ENCODE measurements at regions of chr11 and their contacts with region 1.

Region 1: DNA sequence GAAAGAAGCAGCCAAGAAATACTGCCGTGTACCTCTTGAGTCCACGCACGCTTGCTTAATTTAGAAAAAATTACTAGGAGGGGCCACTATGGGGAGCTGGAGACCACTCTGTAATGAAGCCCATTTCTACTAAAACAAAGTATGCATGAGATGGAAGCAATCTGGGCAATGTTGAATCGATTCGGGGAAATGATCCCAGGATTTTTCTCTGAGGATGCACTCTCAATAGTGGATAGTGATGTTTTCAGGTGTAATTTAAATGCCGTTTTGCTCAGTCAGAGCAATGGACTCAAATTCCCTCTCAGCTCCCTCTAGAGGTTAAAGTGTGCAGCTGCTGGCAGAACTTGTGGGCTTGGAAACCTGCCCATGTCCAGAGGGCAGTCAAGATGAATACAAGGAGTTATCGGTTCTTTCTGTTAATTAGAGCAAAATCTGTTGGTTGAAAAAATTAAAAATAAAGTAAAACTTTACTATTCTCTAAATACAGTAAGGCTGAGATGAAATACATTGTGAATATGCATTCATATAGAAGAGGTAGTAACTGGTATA is 64.1 kb downstream of the ME3 start:
- DNase-seq: peak; percentile 57
- H3K4me3 ChIP-seq: no peak overlapping the region
- H3K27ac ChIP-seq: no peak overlapping the region
- H3K27me3 ChIP-seq: no peaks in the 10 kb centered on the region
- CTCF ChIP-seq: peak; percentile 94

Region 2: GRCh38 chr11:86360775-86361395 is 247.4 kb before region 1 on chr11:
- CTCF ChIA-PET with region 1: interaction called, 15 read pairs
- POLR2A ChIA-PET with region 1: no interaction called
- DNase-seq: peak; percentile 24
- H3K4me3 ChIP-seq: no peak overlapping the region
- H3K27ac ChIP-seq: no peak overlapping the region
- H3K27me3 ChIP-seq: no peaks in the 10 kb centered on the region
- CTCF ChIP-seq: peak; percentile 62

Region 3: DNA sequence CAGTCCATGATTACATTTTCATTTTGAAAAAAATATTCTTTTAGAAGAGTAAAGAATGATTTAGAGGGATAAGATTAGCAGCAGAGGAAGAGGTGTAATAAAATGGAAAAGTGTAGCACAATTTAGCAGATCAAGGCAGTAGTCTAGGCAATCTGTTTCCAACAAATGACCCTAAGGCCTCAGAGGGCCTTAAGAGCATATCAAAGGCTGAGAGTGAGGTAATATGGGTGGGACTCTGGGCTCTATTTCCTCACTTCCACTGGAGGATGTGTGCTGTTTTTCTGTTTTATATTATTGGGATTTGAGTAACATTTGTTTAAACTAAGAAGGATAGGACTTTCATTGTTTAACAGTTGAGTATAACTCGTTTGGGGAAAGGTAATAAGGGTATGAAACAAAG is 204.9 kb before region 1 on chr11:
- CTCF ChIA-PET with region 1: no interaction called
- POLR2A ChIA-PET with region 1: no interaction called
- DNase-seq: no peak
- H3K4me3 ChIP-seq: no peak overlapping the region
- H3K27ac ChIP-seq: no peak overlapping the region
- H3K27me3 ChIP-seq: no peaks in the 10 kb centered on the region
- CTCF ChIP-seq: no peak

Region 4: GRCh38 chr11:86551286-86552092 is 56.8 kb before region 1 on chr11:
- CTCF ChIA-PET with region 1: interaction called, 12 read pairs
- POLR2A ChIA-PET with region 1: no interaction called
- DNase-seq: peak; percentile 76
- H3K4me3 ChIP-seq: no peak overlapping the region
- H3K27ac ChIP-seq: no peak overlapping the region
- H3K27me3 ChIP-seq: no peaks in the 10 kb centered on the region
- CTCF ChIP-seq: no peak

Region 5: DNA sequence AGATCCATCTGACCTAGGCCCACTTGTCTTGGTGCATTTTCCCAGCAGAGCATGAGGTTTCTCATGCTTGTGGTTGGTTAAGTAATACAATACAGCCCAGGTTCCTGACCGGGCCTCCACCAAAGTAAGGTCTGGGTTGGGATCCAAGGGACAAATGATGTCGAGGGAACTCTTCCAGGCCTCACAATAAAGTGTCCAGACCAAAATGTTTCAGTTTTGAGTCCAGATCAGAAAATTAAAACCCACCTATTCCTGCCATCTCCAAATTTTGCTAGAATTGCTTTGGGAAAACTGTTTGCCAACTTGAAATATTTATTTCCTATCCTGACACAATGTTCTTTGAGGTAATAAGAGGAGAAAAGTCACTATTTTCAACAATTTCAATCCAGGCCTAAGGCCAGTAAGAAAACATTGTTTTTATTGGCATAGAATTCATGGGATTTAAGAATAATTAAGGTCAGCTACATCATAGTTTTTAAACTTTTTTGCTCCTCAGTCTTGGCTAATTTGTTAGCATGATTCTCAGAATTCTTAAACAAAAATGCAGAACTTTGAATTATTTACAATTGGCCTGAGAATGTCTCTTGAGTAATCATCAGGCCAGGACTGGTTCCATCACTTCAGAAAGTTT is 12.7 kb after region 1 on chr11:
- CTCF ChIA-PET with region 1: interaction called, 75 read pairs
- POLR2A ChIA-PET with region 1: no interaction called
- DNase-seq: no peak
- H3K4me3 ChIP-seq: no peak overlapping the region
- H3K27ac ChIP-seq: no peak overlapping the region
- H3K27me3 ChIP-seq: no peaks in the 10 kb centered on the region
- CTCF ChIP-seq: no peak

Region 6: DNA sequence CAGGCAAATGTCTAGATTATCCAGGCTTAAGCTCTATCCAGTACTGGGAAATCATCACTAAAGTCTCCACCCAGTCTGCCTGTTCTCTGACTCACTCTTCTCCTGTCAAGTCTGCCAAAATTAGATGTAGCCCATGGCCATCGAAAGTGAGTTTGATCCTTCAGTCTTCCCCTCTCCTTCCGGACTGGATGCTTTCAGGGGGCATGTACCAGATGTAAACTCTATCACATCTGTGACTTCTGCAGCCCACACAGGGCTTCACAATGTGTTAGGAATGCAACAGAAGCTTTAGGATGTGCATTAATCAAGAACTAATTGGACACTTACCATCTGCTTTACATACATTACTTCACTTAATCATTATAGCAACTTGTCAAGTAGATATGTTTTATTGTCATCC is 51.8 kb after region 1 on chr11:
- CTCF ChIA-PET with region 1: interaction called, 15 read pairs
- POLR2A ChIA-PET with region 1: no interaction called
- DNase-seq: no peak
- H3K4me3 ChIP-seq: no peak overlapping the region
- H3K27ac ChIP-seq: no peak overlapping the region
- H3K27me3 ChIP-seq: no peaks in the 10 kb centered on the region
- CTCF ChIP-seq: no peak

Region 7: DNA sequence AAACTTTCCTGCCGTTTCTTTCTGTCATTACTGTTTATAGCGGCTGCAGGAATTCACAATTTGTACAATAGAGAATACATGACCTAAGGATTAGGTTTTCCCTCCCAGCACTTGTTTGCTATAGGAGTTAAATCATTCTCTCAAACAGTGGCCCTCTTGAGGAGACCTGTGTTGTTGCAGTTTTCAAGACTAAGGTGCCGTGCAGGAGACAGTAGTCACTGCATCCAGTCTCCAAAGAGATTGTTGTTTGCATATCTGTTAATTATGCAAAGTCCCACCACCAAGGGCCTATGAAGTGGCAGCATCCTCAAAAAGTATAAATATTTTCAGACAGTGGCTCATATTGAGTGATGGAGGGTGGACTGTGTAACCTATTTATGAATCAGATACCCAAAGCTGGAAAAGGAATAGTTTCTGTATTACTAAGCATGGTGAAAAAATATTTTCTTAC is 194.3 kb after region 1 on chr11:
- CTCF ChIA-PET with region 1: interaction called, 34 read pairs
- POLR2A ChIA-PET with region 1: no interaction called
- DNase-seq: no peak
- H3K4me3 ChIP-seq: peak overlapping the region; percentile 37
- H3K27ac ChIP-seq: no peak overlapping the region
- H3K27me3 ChIP-seq: no peaks in the 10 kb centered on the region
- CTCF ChIP-seq: peak; percentile 68